PC-9 (cell line): ENCODE measurements at regions of chr13 and their contacts with region 1.

Region 1: DNA sequence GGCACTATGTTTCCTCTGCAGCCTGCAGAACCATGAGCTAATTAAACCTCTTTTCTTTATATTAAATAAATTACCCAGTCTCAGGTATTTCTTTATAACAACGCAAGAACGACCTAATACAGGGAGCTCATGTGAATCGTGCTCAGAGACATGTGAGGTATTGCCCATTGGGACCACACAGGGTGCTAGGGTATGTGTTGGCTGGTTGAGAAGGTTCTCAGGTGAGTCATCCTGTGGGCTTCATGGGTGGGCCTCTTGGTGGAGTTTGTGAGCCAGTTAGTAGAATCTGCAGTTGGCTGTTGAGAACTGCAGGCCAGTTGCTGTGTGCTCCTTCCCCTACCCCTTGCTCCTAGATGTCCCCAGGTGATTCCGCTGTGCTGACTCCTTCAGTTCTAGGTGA is 163.0 kb downstream of the HS6ST3 start:
- DNase-seq: no peak
- H3K4me3 ChIP-seq: no peak overlapping the region
- H3K27ac ChIP-seq: no peak overlapping the region
- H3K4me1 ChIP-seq: no peaks in the 10 kb centered on the region
- H3K27me3 ChIP-seq: no peaks in the 10 kb centered on the region
- CTCF ChIP-seq: no peak

Region 2: GRCh38 chr13:95931300-95932025 is 321.4 kb before region 1 on chr13:
- CTCF ChIA-PET with region 1: no interaction called
- POLR2A ChIA-PET with region 1: interaction called, 12 read pairs
- intact Hi-C with region 1: no loop called
- DNase-seq: no peak
- H3K4me3 ChIP-seq: no peak overlapping the region
- H3K27ac ChIP-seq: no peak overlapping the region
- H3K4me1 ChIP-seq: no peaks in the 10 kb centered on the region
- H3K27me3 ChIP-seq: no peaks in the 10 kb centered on the region
- CTCF ChIP-seq: no peak

Region 3: DNA sequence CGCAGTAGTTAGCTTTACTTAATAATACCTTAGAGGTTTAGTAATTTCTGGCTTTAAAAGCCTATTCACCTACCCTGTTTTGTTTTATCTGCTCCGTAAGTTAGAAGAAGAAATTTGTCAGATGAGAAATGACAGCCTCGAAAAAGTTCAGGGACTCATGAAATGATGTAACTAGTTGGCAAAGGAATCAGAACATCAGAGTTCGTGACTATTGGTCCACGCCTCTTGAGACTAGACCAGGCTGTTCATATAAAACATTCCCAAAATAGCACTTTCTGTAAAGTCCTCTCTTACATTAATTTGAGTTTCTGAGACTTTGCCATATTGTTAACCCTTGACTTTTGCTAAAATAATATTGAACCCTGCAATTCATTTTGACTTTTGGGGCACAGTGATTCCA is 71.0 kb before region 1 on chr13:
- CTCF ChIA-PET with region 1: no interaction called
- POLR2A ChIA-PET with region 1: no interaction called
- intact Hi-C with region 1: no loop called
- DNase-seq: no peak
- H3K4me3 ChIP-seq: no peak overlapping the region
- H3K27ac ChIP-seq: no peak overlapping the region
- H3K4me1 ChIP-seq: no peaks in the 10 kb centered on the region
- H3K27me3 ChIP-seq: no peaks in the 10 kb centered on the region
- CTCF ChIP-seq: no peak

Region 4: DNA sequence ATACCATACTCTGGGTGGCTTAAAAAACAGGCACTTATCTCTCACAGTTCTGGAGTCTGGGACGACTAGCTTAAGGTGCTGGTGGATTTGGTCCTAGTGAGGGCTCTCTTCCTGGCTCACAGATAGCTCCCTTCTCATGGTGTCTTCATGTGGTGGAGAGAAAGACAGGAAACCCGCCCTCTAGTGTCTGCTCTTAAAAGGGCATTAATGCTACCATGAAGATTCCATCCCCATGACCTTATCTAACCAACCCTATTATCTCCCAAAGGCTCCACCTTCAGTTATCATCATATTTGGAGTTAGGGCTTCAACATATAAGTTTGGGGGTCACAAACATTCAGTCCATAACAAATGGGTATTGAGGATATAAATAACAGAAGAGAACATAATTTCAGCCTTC is 23.5 kb before region 1 on chr13:
- CTCF ChIA-PET with region 1: no interaction called
- POLR2A ChIA-PET with region 1: no interaction called
- intact Hi-C with region 1: no loop called
- DNase-seq: no peak
- H3K4me3 ChIP-seq: no peak overlapping the region
- H3K27ac ChIP-seq: no peak overlapping the region
- H3K4me1 ChIP-seq: no peaks in the 10 kb centered on the region
- H3K27me3 ChIP-seq: no peaks in the 10 kb centered on the region
- CTCF ChIP-seq: peak; percentile 63

Region 5: DNA sequence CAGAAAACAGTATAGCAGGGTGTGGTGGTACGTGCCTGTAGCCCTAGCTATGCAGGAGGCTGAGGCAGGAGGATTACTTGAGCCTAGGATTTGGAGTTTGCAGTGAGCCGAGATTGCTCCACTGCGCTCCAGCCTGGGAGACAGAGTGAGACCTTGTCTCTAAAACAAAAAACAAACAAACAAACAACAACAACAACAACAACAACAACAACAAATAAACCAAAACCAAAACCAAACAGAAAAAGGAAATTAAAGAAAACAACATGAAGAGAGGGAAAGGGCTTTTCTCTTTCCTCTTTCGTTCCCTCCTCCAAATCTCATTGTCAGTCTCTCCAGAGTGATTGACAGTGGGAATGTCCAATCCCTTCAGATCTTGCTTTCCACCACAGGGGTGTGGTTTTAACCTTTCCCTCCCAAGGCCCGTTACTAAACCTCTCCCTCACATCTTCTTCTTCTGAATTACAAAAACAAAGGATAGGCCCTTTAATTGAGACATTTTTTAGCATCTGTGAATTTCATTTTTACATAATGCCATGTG is 178.2 kb after region 1 on chr13:
- CTCF ChIA-PET with region 1: no interaction called
- POLR2A ChIA-PET with region 1: no interaction called
- intact Hi-C with region 1: no loop called
- DNase-seq: no peak
- H3K4me3 ChIP-seq: no peak overlapping the region
- H3K27ac ChIP-seq: no peak overlapping the region
- H3K4me1 ChIP-seq: no peaks in the 10 kb centered on the region
- H3K27me3 ChIP-seq: 0 out of 2 replicates have a peak, but pooled peaks cover 3% of the 10 kb centered on the region
- CTCF ChIP-seq: no peak

Region 6: DNA sequence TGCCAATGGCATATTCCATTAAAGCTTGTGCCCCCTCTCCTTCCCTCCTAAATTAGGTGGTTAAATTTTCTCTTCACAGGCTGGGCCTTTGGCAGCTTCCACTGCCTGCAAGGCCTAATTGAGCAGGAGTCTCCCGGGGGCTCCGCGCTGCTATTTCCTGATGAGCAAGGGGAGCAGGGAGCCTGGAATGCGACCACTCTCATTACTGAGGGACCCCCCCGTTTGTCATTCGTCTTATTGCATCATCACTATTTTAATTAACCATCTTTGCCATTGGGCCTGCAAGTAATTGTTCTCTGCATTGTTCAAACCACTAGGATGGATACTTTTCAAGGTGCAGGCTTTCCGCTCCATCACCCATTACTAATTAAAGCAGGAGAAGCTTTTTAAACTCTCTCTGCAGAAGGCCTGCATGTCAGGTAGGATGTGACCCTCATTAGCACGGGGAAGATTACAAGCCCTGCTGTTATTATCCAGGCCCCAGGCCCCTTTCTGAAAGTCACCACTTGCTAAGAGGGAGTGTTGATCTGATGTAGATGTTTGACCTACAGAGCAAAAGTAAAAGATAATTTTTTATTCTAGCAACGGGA is 599.0 kb after region 1 on chr13:
- CTCF ChIA-PET with region 1: no interaction called
- POLR2A ChIA-PET with region 1: no interaction called
- intact Hi-C with region 1: no loop called
- DNase-seq: no peak
- H3K4me3 ChIP-seq: no peak overlapping the region
- H3K27ac ChIP-seq: no peak overlapping the region
- H3K4me1 ChIP-seq: no peaks in the 10 kb centered on the region
- H3K27me3 ChIP-seq: peaks cover 26% of the 10 kb centered on the region
- CTCF ChIP-seq: no peak